B cell (primary cell): ENCODE measurements at regions of chr2 and their contacts with region 1.

Region 1: GRCh38 chr2:73907840-73908452 is 15.1 kb downstream of the ACTG2 start:
- DNase-seq: peak; percentile 71
- ATAC-seq: peak; percentile 81
- H3K4me3 ChIP-seq: no peak overlapping the region
- H3K4me3 Mint-ChIP-seq: no peak overlapping the region
- H3K27ac ChIP-seq: no peak overlapping the region
- H3K27ac Mint-ChIP-seq: no peak overlapping the region
- H3K4me1 ChIP-seq: peaks cover 0 to 2% of the 10 kb centered on the region in 2 donors
- H3K4me1 Mint-ChIP-seq: peaks cover 2% of the 10 kb centered on the region
- H3K27me3 ChIP-seq: no peaks in the 10 kb centered on the region
- H3K27me3 Mint-ChIP-seq: no peaks in the 10 kb centered on the region
- CTCF ChIP-seq: peak; percentile 54

Region 2: DNA sequence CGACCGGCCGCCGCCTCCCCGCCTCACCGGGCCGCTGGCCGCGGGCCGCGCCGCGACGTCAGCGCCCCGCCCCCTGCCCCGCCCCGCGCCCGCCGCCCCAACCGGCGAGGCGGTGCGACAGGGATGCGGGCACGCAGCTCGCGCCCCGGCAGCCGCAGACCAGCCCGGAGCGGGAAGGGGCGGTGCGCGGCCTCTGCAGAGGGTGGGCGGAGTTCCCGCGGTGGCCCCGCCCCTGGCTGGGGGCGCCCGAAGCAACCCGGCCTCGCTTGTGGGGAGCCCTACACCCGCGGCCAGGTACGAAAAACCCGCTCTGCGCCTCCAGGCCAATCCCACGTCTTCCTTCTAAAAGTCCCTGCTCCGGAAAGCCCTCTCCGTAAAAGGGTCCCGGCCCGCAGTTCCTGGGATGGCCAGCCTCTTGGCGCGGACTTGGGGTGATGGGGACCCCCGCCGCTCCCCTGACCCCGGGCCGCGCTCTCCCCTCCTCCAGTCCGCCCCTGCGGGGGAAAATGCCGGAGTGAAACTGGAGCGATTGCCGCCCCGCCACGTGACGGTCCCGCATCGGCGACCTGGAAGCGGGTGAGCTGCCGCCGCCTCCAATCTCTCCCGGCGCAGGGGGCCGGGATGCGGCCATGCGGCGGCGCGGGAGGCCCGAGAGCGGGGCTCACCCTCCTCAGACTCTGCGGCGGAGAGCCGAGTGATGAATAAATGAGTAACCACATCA is 794.9 kb before region 1 on chr2 and contains the start of gene RAB11FIP5:
- CTCF ChIA-PET with region 1: no interaction called
- POLR2A ChIA-PET with region 1: no interaction called
- intact Hi-C with region 1: no loop called
- DNase-seq: peak; percentile 83
- ATAC-seq: peak; percentile 91
- H3K4me3 ChIP-seq: peak within 1 kb of the TSS; percentile 15 to 89 (median 74)
- H3K4me3 Mint-ChIP-seq: peak within 1 kb of the TSS; percentile 83
- H3K27ac ChIP-seq: peak within 1 kb of the TSS in 1 of 2 donors; percentile 53
- H3K27ac Mint-ChIP-seq: peak within 1 kb of the TSS; percentile 67
- H3K4me1 ChIP-seq: peaks cover 17% of the 10 kb centered on the region in 2 donors
- H3K4me1 Mint-ChIP-seq: peaks cover 8% of the 10 kb centered on the region
- H3K27me3 ChIP-seq: peaks cover 0 to 23% (median 8%) of the 10 kb centered on the region in 4 experiments
- H3K27me3 Mint-ChIP-seq: peaks cover 3% of the 10 kb centered on the region
- CTCF ChIP-seq: no peak
- total RNA-seq, gene RAB11FIP5: 4.6 and 5.1 TPM in 2 replicates

Region 3: GRCh38 chr2:73944714-73945113 is 36.8 kb after region 1 on chr2:
- CTCF ChIA-PET with region 1: interaction called, 5 read pairs
- POLR2A ChIA-PET with region 1: no interaction called
- intact Hi-C with region 1: loop called (anchors 5 kb)
- DNase-seq: no peak
- ATAC-seq: no peak
- H3K4me3 ChIP-seq: no peak overlapping the region
- H3K4me3 Mint-ChIP-seq: no peak overlapping the region
- H3K27ac ChIP-seq: peak overlapping the region in 1 of 2 donors; percentile 13
- H3K27ac Mint-ChIP-seq: no peak overlapping the region
- H3K4me1 ChIP-seq: peaks cover 20 to 25% of the 10 kb centered on the region in 2 donors
- H3K4me1 Mint-ChIP-seq: peaks cover 47% of the 10 kb centered on the region
- H3K27me3 ChIP-seq: no peaks in the 10 kb centered on the region
- H3K27me3 Mint-ChIP-seq: no peaks in the 10 kb centered on the region
- CTCF ChIP-seq: no peak

Region 4: DNA sequence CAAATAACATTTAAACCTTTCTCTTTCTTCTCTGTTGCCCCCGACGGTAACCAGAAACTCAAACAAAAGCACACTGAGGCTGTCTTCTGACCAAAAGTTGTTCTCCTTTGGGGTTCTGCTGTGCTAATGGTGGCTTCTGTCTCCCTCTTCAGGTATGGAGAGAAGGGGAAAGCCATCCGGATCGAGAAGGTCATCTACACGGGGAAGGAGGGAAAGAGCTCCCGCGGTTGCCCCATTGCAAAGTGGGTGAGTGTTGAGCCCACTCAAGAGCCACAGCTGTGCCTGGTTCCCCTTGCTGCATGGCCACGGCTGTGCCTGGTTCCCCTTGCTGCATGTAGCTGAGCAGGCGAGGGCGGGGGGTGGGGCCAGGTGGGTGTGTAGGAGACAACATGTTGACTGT is 172.4 kb after region 1 on chr2:
- CTCF ChIA-PET with region 1: interaction called, 14 read pairs
- POLR2A ChIA-PET with region 1: no interaction called
- intact Hi-C with region 1: loop called (anchors 1 kb)
- DNase-seq: no peak
- ATAC-seq: peak; percentile 46
- H3K4me3 ChIP-seq: no peak overlapping the region
- H3K4me3 Mint-ChIP-seq: no peak overlapping the region
- H3K27ac ChIP-seq: no peak overlapping the region
- H3K27ac Mint-ChIP-seq: peak overlapping the region; percentile 81
- H3K4me1 ChIP-seq: peaks cover 3 to 6% of the 10 kb centered on the region in 2 donors
- H3K4me1 Mint-ChIP-seq: peaks cover 14% of the 10 kb centered on the region
- H3K27me3 ChIP-seq: no peaks in the 10 kb centered on the region
- H3K27me3 Mint-ChIP-seq: no peaks in the 10 kb centered on the region
- CTCF ChIP-seq: peak; percentile 19

Region 5: DNA sequence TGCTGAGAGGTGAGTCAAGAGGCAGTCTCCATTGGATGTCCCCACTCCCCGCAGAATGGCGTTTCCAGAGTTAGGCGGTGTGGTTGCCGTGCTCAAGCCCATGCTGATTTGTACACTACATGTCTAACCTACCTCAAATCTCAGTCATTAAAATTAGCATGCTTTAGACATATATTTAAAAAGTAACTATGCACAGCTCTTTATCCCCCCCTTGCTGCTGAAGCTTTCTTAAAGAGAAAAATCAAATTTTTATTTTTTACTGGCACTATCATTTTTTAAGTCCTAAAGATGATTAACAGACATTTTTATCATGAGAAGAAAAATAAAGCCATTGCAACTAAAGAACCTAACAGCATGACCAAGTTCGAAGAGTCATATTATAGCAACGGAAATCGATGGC is 196.9 kb after region 1 on chr2:
- CTCF ChIA-PET with region 1: interaction called, 18 read pairs
- POLR2A ChIA-PET with region 1: no interaction called
- intact Hi-C with region 1: no loop called
- DNase-seq: no peak
- ATAC-seq: no peak
- H3K4me3 ChIP-seq: no peak overlapping the region
- H3K4me3 Mint-ChIP-seq: no peak overlapping the region
- H3K27ac ChIP-seq: no peak overlapping the region
- H3K27ac Mint-ChIP-seq: no peak overlapping the region
- H3K4me1 ChIP-seq: no peaks in the 10 kb centered on the region
- H3K4me1 Mint-ChIP-seq: no peaks in the 10 kb centered on the region
- H3K27me3 ChIP-seq: no peaks in the 10 kb centered on the region
- H3K27me3 Mint-ChIP-seq: no peaks in the 10 kb centered on the region
- CTCF ChIP-seq: peak; percentile 51

Region 6: DNA sequence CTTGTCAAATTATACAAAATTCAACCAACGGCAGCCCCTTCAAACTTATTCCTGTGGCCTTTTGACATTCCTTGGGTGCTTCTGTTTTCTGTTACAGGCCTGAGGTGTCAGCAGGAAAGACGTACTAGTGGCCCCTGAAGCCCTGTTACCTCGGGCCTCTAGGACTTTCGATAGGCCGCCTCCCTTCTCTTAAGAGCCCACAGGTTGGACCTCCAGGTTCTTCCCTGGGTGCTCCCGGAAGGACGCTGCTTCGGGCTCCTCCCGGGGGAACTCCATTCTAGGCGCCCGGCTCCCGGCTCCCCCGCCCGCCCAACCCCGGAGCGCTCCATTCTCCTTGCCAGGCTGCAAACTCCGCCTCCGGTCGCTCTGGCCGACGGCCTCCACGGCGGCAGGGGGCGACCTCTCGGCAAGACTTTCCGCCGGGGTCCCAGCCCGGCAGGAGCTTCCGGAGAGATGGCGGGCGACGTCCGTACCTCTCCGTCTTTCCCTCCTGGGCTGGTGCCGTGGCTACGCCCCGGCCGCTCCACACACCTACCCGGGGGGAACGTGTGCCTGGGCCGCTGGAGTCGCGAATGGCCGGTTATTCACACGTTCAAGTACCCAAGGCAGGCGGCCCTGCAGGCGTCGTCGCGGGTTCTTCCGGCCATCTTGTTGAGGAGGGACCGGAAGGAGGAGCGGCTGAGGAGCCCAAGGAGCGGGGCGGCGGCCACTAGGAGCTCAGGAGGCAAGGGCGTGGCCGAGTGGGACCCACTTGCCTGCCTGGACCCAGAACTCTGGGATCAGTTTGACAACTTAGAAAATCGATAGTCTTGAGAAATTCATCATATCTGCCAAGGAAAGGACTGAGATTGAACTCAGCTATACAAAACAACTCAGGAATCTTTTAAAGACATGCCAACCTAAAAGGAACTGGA is 212.2 kb after region 1 on chr2:
- CTCF ChIA-PET with region 1: interaction called, 5 read pairs
- POLR2A ChIA-PET with region 1: no interaction called
- intact Hi-C with region 1: loop called (anchors 1 kb)
- DNase-seq: peak; percentile 91
- ATAC-seq: peak; percentile 96
- H3K4me3 ChIP-seq: peak overlapping the region; percentile 55 to 93 (median 88)
- H3K4me3 Mint-ChIP-seq: peak overlapping the region; percentile 91
- H3K27ac ChIP-seq: peak overlapping the region; percentile 85 to 88
- H3K27ac Mint-ChIP-seq: peak overlapping the region; percentile 94
- H3K4me1 ChIP-seq: peaks cover 0 to 11% of the 10 kb centered on the region in 2 donors
- H3K4me1 Mint-ChIP-seq: peaks cover 8% of the 10 kb centered on the region
- H3K27me3 ChIP-seq: peaks cover 0 to 2% (median 0%) of the 10 kb centered on the region in 4 experiments
- H3K27me3 Mint-ChIP-seq: peaks cover 2% of the 10 kb centered on the region
- CTCF ChIP-seq: peak; percentile 69